Mammary epithelial cell (primary cell): ENCODE measurements at regions of chr12 and their contacts with region 1.

Region 1: DNA sequence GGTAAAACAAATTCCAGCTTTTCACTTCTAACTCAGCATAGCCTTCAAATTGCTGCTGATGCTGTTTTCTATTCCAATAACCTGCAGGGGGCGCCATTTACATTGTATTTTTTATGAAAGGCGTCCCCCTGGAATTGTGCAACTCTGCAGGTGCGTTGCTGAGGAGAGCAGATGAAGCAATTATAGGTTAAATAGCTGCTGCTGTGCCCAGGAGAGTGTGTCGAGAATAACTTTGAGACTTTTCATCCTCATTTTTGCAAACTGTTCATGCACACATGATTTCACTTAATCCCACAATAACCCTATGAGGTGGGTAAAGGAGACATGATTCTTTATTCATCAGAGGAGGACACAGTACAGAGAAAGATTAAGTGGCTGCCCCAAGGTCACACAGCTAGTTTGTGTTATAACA is 75.7 kb downstream of the MYRFL start:
- DNase-seq: peak; percentile 75
- H3K4me3 ChIP-seq: no peak overlapping the region
- H3K27ac ChIP-seq: no peak overlapping the region
- H3K4me1 ChIP-seq: peaks cover 34% of the 10 kb centered on the region
- H3K27me3 ChIP-seq: no peaks in the 10 kb centered on the region
- CTCF ChIP-seq: peak; percentile 64 to 69

Region 2: DNA sequence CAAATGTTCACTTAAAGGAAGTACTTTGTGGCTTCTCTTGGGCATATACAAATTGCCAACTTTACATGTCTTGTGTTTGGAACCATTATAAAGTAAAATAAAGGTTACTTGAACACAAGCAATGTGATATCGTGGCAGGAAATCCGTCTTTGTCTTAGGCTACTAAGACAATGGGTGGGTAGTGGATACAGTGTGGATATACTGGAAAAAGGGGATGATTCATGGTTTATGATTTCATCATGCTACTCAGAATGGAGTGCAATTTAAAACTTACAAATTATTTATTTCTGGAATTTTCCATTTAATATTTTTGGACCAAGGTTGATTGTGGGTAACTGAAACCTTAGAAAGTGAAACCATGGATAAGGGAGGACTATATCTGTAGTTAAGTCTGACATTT is 27.3 kb before region 1 on chr12:
- CTCF ChIA-PET with region 1: no interaction called
- dilution Hi-C with region 1: no loop called
- in situ Hi-C with region 1: no loop called
- intact Hi-C with region 1: no loop called
- DNase-seq: peak; percentile 27
- H3K4me3 ChIP-seq: no peak overlapping the region
- H3K27ac ChIP-seq: no peak overlapping the region
- H3K4me1 ChIP-seq: peaks cover 10% of the 10 kb centered on the region
- H3K27me3 ChIP-seq: no peaks in the 10 kb centered on the region
- CTCF ChIP-seq: no peak

Region 3: GRCh38 chr12:69966409-69967207 is 65.9 kb after region 1 on chr12:
- CTCF ChIA-PET with region 1: interaction called, 8 read pairs
- dilution Hi-C with region 1: no loop called
- in situ Hi-C with region 1: no loop called
- intact Hi-C with region 1: loop called (anchors 1 kb)
- DNase-seq: peak; percentile 99
- H3K4me3 ChIP-seq: no peak overlapping the region
- H3K27ac ChIP-seq: peak overlapping the region; percentile 100
- H3K4me1 ChIP-seq: peaks cover 20% of the 10 kb centered on the region
- H3K27me3 ChIP-seq: no peaks in the 10 kb centered on the region
- CTCF ChIP-seq: no peak

Region 4: GRCh38 chr12:70049600-70050360 is 149.1 kb after region 1 on chr12:
- CTCF ChIA-PET with region 1: no interaction called
- dilution Hi-C with region 1: no loop called
- in situ Hi-C with region 1: no loop called
- intact Hi-C with region 1: loop called (anchors 10 kb)
- DNase-seq: peak; percentile 88
- H3K4me3 ChIP-seq: no peak overlapping the region
- H3K27ac ChIP-seq: no peak overlapping the region
- H3K4me1 ChIP-seq: peaks cover 24% of the 10 kb centered on the region
- H3K27me3 ChIP-seq: no peaks in the 10 kb centered on the region
- CTCF ChIP-seq: no peak

Region 5: GRCh38 chr12:70242695-70243509 is 342.2 kb after region 1 on chr12 and contains the start of gene CNOT2:
- CTCF ChIA-PET with region 1: no interaction called
- dilution Hi-C with region 1: no loop called
- in situ Hi-C with region 1: loop called in 1 of 2 experiments (anchors 5 kb)
- intact Hi-C with region 1: loop called (anchors 1 kb)
- DNase-seq: peak; percentile 91
- H3K4me3 ChIP-seq: peak within 1 kb of the TSS; percentile 64 to 96 (median 93)
- H3K27ac ChIP-seq: peak within 1 kb of the TSS; percentile 99
- H3K4me1 ChIP-seq: peaks cover 16% of the 10 kb centered on the region
- H3K27me3 ChIP-seq: no peaks in the 10 kb centered on the region
- CTCF ChIP-seq: no peak
- total RNA-seq, gene CNOT2: 62.5 to 123 TPM

Region 6: DNA sequence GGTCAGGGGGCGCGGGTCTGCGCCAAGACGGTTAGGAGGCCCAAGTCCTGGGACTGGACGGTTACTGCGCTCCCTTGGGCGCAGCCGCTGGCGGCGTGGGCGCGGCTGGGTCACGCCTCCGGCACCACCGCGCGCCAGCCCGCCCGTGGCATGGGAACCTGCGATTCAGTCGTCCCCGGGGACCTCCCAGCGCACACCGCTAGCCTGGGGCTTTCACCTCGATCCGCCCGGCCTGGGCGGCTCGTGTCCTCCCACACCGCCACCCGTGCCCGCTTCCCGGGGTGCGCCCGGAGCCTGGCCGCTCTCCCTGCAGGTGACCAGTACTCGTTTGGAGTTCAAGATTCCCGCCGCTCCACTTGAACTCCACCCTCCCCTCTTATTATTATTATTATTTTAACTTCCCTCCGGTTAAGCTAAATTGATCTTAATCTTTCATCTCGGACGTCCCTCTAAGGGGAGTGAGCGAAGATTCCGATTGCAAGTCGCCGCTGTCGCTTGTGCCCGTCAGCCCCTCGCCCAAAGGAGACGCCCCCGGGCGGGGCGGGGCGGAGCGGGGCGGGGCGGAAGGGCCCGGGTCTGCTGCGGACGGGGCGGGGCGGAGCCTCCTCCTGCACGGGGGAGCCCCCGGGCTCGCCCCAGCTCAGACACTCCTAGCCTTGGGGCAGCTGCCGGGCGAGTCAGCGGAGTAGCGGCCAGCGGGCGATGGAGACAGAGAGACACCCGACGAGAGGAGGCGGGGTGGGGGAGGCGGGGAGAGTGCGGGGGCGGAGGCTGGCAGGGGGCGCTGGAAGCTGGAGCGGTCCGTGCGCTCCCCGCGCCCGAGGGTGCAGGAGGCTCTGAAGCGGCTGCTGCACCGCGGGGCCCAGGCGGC is 465.2 kb after region 1 on chr12 and contains the start of gene KCNMB4:
- CTCF ChIA-PET with region 1: no interaction called
- dilution Hi-C with region 1: no loop called
- in situ Hi-C with region 1: loop called in 1 of 2 experiments (anchors 25 kb)
- intact Hi-C with region 1: loop called (anchors 2 kb)
- DNase-seq: peak; percentile 43
- H3K4me3 ChIP-seq: peak within 1 kb of the TSS; percentile 60 to 97 (median 62)
- H3K27ac ChIP-seq: no peak within 1 kb of the TSS
- H3K4me1 ChIP-seq: peaks cover 19% of the 10 kb centered on the region
- H3K27me3 ChIP-seq: no peaks in the 10 kb centered on the region
- CTCF ChIP-seq: no peak
- total RNA-seq, gene KCNMB4: 0.28 to 1.0 TPM